WTC11 (cell line): ENCODE measurements at regions of chr18 and their contacts with region 1.

Region 1: GRCh38 chr18:58117786-58118403 is 73.9 kb downstream of the NEDD4L start:
- DNase-seq: no peak
- ATAC-seq: no peak
- H3K4me3 Mint-ChIP-seq: no peak overlapping the region
- H3K27ac Mint-ChIP-seq: peak overlapping the region; percentile 41; the same call in 1 of the 2 replicates
- H3K4me1 Mint-ChIP-seq: peaks cover 61% of the 10 kb centered on the region
- H3K27me3 Mint-ChIP-seq: no peaks in the 10 kb centered on the region
- CTCF ChIP-seq: no peak

Region 2: DNA sequence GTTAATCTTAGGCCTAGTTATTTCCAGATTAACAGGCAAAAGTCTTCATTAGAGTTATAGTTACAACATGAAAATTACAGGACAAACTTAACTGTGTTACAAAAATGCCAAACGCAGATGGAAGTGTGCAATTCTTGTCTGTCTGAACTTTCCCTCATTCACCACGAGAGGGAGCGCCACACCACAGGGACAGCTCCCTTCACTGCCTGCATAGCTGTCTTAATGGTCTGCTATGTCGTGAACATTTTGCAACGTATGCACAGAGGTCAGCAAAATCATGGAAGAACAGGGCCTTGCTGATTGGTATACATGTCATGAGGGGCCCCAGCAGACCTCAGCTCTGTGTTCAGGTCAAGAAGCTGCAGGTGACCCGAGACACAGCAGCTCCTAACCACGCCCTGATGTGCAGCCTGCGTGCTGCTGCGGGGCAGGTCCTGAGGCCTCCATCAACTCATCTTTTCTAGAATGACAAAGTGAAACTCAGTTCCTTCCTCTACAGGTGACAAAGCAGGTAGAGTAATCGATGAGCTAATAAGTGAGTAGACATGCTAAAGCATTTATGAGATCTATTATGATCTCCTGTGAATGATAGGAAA is 236.0 kb before region 1 on chr18:
- CTCF ChIA-PET with region 1: interaction called, 16 read pairs
- POLR2A ChIA-PET with region 1: no interaction called
- DNase-seq: peak; percentile 59
- ATAC-seq: peak; percentile 95
- H3K4me3 Mint-ChIP-seq: no peak overlapping the region
- H3K27ac Mint-ChIP-seq: no peak overlapping the region
- H3K4me1 Mint-ChIP-seq: no peaks in the 10 kb centered on the region
- H3K27me3 Mint-ChIP-seq: peaks cover 4% of the 10 kb centered on the region; the same call in 1 of the 2 replicates
- CTCF ChIP-seq: peak; percentile 89

Region 3: DNA sequence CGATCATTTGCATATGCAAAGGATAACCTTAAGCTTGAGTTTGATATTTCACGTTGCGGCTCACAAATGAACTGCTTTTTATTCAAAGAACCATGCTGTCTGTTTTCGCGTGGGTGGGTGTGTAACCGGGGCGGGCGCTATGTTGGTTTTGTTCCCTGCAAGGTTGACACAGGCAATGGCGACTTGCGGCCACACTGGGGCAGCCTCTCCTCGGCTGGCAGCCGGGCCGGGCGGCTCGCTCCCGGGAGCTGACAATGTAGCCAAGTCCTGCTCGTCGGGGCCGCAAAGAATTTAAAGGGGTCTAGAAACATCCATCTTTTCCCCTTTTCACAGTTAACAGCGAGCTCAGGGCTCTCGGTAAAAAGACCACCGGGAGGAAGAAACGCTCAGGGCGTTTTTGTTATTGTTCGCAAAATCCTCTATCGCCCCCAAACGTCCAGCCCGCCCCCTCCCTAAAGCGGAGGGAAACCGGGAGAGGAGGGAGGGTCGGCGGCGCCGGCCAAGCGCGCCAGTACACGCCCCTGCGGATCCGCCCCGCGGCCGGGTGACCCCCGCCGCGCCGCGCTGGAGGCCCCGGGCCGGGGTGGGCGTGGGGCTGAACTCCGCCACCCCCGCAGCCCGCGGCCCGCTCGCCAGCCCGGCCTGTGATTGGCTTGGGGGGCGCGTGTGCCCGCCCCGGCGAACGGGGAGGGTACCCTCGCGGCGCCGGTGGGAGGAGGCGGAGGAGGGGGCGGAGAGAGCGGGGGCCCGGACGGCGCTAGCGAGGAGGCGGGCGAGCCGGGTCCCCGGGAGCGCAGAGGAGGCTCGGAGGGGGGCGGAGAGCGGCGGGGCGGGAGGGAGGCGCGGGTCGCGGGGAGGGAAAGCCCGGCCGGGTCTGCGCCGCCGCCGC is 74.2 kb before region 1 on chr18 and contains the start of gene NEDD4L:
- CTCF ChIA-PET with region 1: interaction called, 90 read pairs
- POLR2A ChIA-PET with region 1: interaction called, 7 read pairs
- DNase-seq: peak; percentile 83
- ATAC-seq: peak; percentile 68
- H3K4me3 Mint-ChIP-seq: peak within 1 kb of the TSS; percentile 98
- H3K27ac Mint-ChIP-seq: peak within 1 kb of the TSS; percentile 97
- H3K4me1 Mint-ChIP-seq: peaks cover 28% of the 10 kb centered on the region
- H3K27me3 Mint-ChIP-seq: peaks cover 9% of the 10 kb centered on the region
- CTCF ChIP-seq: peak; percentile 32; the same call in 1 of the 2 replicates
- total RNA-seq, gene NEDD4L: 60.9 to 88.0 TPM (median 69.3 TPM) in 3 replicates

Region 4: DNA sequence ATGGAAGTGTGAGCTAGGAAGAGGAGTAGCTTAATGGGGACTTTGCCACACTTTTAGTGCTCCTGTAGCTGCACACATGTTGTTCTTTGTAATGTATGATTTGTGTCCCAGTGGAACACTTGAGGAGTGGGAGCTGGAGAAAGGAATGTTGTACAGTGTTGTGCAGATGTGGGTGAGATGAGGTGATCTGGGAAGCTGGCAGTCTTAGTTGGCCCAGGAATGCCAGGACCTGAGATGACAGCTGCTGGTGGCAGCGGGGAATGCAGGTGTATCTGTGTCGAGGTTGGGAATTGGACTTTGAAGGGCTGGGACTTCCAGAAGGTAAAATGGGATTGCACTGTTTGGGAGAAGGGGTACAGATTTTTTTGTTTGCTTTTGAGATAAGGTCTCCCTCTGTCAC is 50.3 kb before region 1 on chr18:
- CTCF ChIA-PET with region 1: interaction called, 32 read pairs
- POLR2A ChIA-PET with region 1: no interaction called
- DNase-seq: no peak
- ATAC-seq: no peak; the same call in 1 of the 2 replicates
- H3K4me3 Mint-ChIP-seq: no peak overlapping the region
- H3K27ac Mint-ChIP-seq: no peak overlapping the region
- H3K4me1 Mint-ChIP-seq: peaks cover 51% of the 10 kb centered on the region
- H3K27me3 Mint-ChIP-seq: no peaks in the 10 kb centered on the region
- CTCF ChIP-seq: no peak

Region 5: DNA sequence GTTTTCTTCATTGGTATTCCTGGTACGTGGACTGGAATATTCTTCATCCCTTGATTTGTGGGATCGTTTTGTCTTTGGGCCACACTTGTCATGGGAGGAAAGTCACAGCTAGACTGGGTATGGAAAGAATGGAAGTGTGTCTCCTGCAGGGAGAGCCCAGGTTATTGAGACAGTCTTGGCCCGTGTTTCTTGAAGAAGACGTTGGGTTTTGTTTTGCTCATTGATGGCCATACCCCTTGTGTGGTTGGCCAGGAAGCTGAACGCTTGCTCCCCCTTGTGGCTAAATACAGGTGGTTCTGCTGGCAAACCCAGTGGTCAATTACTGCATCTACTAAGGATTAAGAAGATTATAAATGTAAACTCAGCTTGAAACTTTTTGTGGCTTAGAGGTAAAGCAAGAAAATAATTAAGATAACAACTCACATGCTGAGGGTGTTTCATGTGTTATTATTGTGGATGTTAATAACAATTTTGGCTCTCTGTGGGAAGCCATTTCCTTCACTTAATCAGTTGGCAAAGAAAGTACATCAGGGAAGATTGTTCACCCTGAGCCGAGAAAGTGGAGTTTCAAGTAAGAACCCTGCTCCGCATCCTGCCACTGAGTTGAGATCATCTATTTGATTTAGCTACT is 17.9 kb after region 1 on chr18:
- CTCF ChIA-PET with region 1: interaction called, 26 read pairs
- POLR2A ChIA-PET with region 1: no interaction called
- DNase-seq: peak; percentile 74
- ATAC-seq: peak; percentile 85
- H3K4me3 Mint-ChIP-seq: no peak overlapping the region
- H3K27ac Mint-ChIP-seq: peak overlapping the region; percentile 85
- H3K4me1 Mint-ChIP-seq: peaks cover 52% of the 10 kb centered on the region
- H3K27me3 Mint-ChIP-seq: no peaks in the 10 kb centered on the region
- CTCF ChIP-seq: peak; percentile 85